Gastrocnemius medialis (tissue), 4 donors: ENCODE measurements at regions of chr20 and their contacts with region 1.

Region 1: DNA sequence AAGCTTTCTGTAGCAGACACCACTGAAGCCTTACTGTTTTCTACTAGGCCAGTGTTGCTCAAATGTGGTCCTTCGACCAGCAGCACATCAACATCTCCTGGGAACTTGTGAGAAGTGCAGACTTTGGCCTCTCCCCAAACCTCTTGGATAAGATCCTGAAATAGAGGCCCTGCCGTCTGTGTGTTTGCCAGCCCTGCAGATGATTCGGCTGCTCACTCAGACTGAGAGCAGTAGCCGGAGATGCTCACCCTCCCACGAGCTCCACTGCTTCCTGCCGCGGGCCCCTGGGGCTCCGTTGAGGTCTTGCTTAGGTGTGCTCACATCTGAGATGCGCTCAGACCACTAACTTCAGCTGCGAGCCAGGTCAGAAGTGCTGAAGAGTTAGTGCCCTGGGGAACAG is 129.5 kb upstream of the SSTR4 start:
- DNase-seq: peak in 1 of 2 donors; percentile 14
- ATAC-seq: peak; percentile 33 to 36
- H3K4me3 ChIP-seq: no peak overlapping the region
- H3K27ac ChIP-seq: no peak overlapping the region
- H3K4me1 ChIP-seq: no peaks in the 10 kb centered on the region
- H3K27me3 ChIP-seq: no peaks in the 10 kb centered on the region
- CTCF ChIP-seq: no peak
- POLR2A ChIP-seq: no peak

Region 2: GRCh38 chr20:22723648-22724047 is 182.0 kb before region 1 on chr20:
- in situ Hi-C with region 1: no loop called
- intact Hi-C with region 1: no loop called
- DNase-seq: no peak
- ATAC-seq: no peak
- H3K4me3 ChIP-seq: no peak overlapping the region
- H3K27ac ChIP-seq: no peak overlapping the region
- H3K4me1 ChIP-seq: no peaks in the 10 kb centered on the region
- H3K27me3 ChIP-seq: no peaks in the 10 kb centered on the region
- CTCF ChIP-seq: no peak
- POLR2A ChIP-seq: no peak

Region 3: DNA sequence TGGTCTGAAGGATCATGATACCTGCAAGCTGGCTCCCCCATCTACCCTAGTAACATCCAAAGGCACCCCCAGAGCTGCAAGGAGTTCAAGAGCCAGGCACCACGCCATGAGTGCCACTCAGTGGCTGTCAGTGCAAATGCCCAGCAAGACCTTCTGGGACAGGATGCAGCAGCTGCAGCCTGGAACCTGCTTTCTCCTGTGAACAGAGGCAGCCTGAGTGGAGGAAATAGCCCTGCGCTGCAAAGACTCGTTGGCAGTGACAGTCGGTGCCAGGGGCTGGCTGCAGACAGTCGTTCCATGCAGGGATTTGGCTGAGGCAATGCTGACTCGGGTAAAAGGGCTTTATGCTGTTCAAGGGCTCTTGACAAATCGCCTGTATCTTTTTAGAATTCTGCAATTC is 113.7 kb after region 1 on chr20:
- in situ Hi-C with region 1: loop called in 1 of 4 experiments (anchors 25 kb)
- intact Hi-C with region 1: no loop called
- DNase-seq: peak in 1 of 2 donors; percentile 23
- ATAC-seq: peak; percentile 30 to 44
- H3K4me3 ChIP-seq: no peak overlapping the region
- H3K27ac ChIP-seq: no peak overlapping the region
- H3K4me1 ChIP-seq: peaks cover 0 to 4% of the 10 kb centered on the region in 2 donors
- H3K27me3 ChIP-seq: no peaks in the 10 kb centered on the region
- CTCF ChIP-seq: no peak
- POLR2A ChIP-seq: no peak